Endothelial cell of umbilical vein (primary cell): ENCODE measurements at regions of chr2 and their contacts with region 1.

Region 1: DNA sequence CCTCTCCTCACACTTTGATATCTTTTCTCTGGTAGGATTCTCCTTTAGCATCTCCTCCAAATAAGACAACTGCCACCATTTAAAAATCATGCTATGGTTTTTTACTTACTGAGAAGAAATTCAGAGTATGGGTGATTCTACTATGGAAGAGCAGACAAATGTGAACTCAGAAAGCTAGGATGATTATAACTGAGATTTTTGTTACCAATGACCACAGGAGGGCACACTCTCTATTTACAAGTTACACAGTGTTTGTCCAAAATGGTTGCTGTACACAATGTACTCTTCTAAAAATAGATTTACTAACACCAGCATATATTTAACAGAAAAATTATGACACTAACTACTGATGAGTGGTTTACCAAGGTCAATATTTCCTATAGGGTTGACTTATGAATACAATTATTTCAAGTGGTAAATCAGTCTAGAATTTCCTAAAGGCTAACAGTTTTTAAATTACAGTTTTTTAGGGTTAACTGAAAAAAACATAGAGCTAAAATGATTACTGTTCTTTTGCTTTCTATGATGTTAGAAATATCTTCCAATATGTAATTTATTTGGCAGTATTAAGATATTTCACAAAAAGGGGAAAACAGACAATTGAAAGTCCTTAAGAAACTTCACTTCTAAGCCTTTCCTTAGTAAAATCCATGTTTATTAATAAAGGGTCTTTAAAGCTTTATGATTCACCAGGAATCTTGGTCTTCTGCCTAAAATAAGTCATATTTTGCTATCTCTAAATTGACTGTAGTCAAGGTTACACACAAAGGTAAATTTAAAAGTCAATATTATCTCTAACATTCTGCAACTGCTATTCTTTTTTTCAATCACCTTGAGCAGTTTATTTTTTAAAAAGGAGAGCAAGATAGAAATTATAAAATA is 57.2 kb downstream of the MAP4K3 start:
- DNase-seq: peak; percentile 69
- H3K4me3 ChIP-seq: no peak overlapping the region
- H3K27ac ChIP-seq: peak overlapping the region; percentile 73
- H3K4me1 ChIP-seq: peaks cover 11% of the 10 kb centered on the region
- H3K27me3 ChIP-seq: no peaks in the 10 kb centered on the region
- CTCF ChIP-seq: peak; percentile 29 to 34
- POLR2A ChIP-seq: no peak

Region 2: DNA sequence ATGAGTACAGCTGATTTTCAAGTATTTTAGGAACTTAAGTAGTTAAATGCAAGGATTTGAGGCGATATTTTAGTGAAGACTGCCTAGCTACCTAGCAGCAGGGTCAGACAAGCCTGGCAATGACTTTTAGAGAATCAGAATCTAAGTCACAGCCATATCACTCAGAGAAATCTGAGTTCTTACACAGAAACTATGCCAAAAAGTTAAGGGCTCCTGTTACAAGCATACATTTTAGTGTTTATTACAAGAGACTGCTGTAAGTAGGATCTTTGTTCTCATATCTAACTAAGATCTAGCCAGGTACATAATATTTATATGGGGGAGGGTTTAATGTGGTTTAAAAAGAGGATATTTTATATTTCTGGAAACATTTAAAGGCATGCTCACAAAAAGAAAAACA is 19.7 kb after region 1 on chr2:
- CTCF ChIA-PET with region 1: interaction called, 24 read pairs
- POLR2A ChIA-PET with region 1: interaction called, 6 read pairs
- dilution Hi-C with region 1: no loop called
- intact Hi-C with region 1: no loop called
- DNase-seq: no peak
- H3K4me3 ChIP-seq: no peak overlapping the region
- H3K27ac ChIP-seq: no peak overlapping the region
- H3K4me1 ChIP-seq: peaks cover 17% of the 10 kb centered on the region
- H3K27me3 ChIP-seq: no peaks in the 10 kb centered on the region
- CTCF ChIP-seq: no peak
- POLR2A ChIP-seq: no peak

Region 3: DNA sequence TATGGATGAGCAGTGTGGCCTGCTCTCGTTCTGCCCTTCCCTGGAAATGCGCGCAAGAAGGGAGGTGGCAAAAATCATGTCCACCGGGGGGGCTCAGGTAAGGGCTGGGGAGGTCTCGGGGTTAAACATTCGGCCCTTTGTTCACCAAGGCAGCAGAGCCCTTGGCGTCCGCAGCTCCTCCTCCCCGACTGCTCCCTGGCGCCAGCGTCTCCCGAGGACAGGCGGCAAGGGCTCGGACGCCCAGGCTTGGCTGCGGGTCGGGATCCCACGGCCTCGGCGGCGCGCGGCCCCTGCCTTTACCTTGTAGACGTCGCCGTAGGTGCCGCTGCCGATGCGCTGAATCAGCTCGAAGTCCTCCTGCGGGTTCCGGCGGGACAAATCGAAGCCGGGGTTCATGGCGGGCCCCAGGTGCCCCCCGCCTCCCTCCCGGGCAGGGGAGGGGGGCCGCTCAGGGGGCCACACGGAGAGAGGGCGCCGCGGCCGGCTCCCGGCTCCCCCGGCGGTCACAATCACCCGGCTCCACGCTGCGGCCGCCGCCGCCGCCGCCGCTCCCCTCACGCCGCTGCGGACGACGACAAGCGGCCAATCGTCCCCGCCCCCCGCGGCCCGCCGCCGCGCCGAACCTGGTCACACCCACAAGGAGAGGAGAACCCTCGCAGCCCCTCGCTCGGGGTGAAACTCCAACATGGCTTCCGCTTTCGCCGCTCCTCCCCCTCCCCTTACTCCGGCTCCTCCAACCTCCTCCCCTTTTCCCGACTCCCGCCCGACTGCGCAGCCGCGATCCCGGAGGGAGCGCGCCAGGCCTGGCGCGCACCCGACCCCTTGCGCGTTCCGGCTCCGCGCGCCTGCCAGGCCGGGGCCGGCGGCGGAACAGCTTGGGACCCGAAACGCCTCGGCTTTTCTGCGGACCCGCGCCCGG is 57.0 kb after region 1 on chr2 and contains the start of gene MAP4K3:
- CTCF ChIA-PET with region 1: interaction called, 20 read pairs
- POLR2A ChIA-PET with region 1: no interaction called
- dilution Hi-C with region 1: no loop called
- intact Hi-C with region 1: loop called (anchors 1 kb)
- DNase-seq: peak; percentile 95
- H3K4me3 ChIP-seq: peak within 1 kb of the TSS; percentile 48 to 83 (median 56)
- H3K27ac ChIP-seq: peak within 1 kb of the TSS; percentile 73
- H3K4me1 ChIP-seq: peaks cover 35% of the 10 kb centered on the region
- H3K27me3 ChIP-seq: no peaks in the 10 kb centered on the region
- CTCF ChIP-seq: no peak
- POLR2A ChIP-seq: peak; percentile 59
- total RNA-seq, gene MAP4K3: 45.9 and 46.2 TPM in 2 replicates

Region 4: GRCh38 chr2:39494784-39495251 is 114.9 kb after region 1 on chr2:
- CTCF ChIA-PET with region 1: interaction called, 15 read pairs
- POLR2A ChIA-PET with region 1: no interaction called
- dilution Hi-C with region 1: no loop called
- intact Hi-C with region 1: no loop called
- DNase-seq: peak; percentile 92
- H3K4me3 ChIP-seq: no peak overlapping the region
- H3K27ac ChIP-seq: peak overlapping the region; percentile 54
- H3K4me1 ChIP-seq: peaks cover 21% of the 10 kb centered on the region
- H3K27me3 ChIP-seq: no peaks in the 10 kb centered on the region
- CTCF ChIP-seq: no peak
- POLR2A ChIP-seq: no peak

Region 5: DNA sequence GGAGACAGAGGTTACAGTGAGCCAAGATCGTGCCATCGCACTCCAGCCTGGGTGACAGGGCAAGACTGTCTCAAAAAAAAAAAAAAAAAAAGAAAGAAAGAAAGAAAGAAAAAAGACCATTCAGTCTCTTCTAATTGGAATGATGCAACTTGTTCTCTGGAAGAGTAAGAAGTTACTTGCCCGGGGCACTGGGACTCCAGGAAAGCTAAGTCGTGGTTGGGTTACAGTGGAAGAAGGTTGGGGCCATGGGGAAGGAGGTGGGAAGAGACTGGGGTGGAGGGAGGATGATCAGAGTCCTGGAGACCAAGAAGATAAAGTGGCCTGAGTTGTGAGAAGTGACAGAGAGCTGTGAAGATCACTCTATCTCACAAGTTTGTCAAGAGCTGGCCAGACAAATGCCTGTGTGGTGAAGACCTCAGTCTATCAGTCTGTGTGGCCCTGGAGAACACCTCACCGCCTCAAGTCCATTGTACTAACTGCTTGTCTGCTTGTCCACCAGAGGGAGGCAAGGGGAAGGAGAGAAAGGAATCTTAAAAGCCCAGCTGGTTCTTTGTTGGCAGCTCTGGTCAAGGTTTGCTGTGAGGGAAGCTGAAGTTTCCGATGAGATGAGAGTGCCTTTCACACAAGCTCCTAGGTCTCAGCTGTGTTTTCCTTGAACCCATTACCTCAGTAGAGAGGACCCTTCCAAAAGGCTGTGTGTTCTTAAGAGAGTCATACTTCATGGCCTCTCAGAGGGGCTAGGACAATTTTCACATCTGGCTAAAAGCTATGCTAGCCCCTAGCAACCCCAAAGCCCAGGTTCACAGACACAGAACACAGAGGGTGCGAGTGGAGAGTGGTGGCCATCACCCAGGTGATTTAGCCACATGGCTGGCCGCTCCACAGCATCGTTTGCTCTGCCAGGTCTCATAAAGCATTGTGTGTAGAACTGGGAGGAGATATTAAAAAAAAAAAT is 213.8 kb after region 1 on chr2:
- CTCF ChIA-PET with region 1: interaction called, 32 read pairs
- POLR2A ChIA-PET with region 1: no interaction called
- dilution Hi-C with region 1: no loop called
- intact Hi-C with region 1: loop called (anchors 5 kb)
- DNase-seq: peak; percentile 74
- H3K4me3 ChIP-seq: no peak overlapping the region
- H3K27ac ChIP-seq: no peak overlapping the region
- H3K4me1 ChIP-seq: no peaks in the 10 kb centered on the region
- H3K27me3 ChIP-seq: no peaks in the 10 kb centered on the region
- CTCF ChIP-seq: peak; percentile 48 to 71
- POLR2A ChIP-seq: no peak